ENCODE measurements at regions of chr18 and their contacts with region 1.

Region 1: DNA sequence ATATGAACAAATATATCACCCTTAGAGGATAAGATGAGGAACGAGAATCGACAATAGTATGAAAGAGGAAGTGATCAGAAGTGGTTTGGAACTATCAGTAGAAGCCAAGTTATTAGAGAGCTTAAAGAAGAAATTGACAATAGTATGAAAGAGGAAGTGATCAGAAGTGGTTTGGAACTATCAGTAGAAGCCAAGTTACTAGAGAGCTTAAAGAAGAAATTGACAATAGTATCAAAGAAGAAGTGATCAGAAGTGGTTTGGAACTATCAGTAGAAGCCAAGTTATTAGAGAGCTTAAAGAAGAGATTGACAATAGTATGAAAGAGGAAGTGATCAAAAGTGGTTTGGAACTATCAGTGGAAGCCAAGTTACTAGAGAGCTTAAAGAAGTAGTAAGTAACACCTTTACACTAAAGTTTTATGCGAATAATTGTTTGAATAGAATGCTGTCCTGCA is 175.5 kb downstream of the ZNF407 start:
- DNase-seq: no peak
- ATAC-seq: no peak

Region 2: DNA sequence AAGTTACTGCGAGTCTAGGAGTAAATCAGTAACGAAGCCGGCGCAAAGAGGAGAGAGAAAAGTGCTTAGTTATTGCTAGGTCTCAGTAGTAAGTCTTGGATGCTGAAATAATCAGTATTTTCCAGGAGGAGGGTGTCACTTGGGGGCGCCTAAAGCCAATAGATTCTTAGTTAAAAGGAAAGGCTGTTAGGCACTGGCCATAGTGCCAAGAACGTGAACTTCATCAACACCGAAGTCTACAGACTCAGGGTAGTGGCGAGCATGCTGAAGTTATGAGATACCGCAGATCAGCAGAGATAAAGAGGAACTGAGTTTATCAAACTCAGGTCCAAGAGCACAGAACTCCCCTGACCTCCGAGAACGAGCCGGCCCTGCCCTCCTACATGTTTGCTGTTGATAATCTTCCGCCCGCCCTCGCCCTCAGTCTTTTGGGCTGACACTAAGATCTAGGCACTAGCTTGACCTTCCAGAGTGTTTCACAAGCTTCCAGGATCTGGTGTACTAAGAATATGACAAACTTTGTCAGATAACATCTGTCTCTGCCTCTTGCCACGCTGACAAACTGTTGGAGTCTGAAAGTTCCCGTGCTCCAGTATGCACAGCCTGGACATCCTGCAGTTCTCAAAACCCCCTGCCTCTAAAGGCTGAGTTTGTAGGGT is 530.6 kb before region 1 on chr18:
- intact Hi-C with region 1: no loop called
- DNase-seq: peak; percentile 68
- ATAC-seq: peak; percentile 91

Region 3: DNA sequence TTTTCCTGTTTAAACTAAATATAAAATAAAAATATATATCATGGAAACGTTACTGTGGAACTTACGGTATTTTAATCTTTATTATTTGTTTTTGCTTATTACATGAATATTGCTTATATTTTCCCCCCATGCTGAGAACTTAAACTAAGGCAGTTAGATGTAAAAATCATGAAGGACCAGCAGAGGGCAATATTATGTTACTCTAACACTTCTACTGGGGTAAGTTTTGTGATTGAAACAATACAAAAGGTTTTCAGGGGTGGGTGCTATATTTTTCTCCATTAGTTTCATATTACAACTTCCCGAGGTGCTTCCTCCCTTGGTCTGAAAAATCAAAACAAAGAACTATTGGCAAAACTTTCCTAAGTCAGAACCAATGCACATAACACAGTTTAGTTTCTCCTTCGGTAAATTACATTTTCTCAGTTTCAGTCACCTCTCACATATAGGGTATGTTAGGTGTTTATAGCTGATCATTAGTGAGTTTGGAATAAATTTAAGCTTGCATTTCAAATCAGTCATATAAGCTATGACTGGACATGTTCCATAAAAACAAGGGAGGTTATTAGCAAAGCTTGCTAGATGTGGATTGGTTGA is 120.7 kb before region 1 on chr18:
- intact Hi-C with region 1: no loop called
- DNase-seq: no peak
- ATAC-seq: no peak

Region 4: GRCh38 chr18:74662622-74663021 is 110.6 kb before region 1 on chr18:
- intact Hi-C with region 1: no loop called
- DNase-seq: no peak
- ATAC-seq: no peak

Region 5: GRCh38 chr18:74739926-74740325 is 33.3 kb before region 1 on chr18:
- intact Hi-C with region 1: loop called (anchors 5 kb)
- DNase-seq: no peak
- ATAC-seq: no peak

Region 6: DNA sequence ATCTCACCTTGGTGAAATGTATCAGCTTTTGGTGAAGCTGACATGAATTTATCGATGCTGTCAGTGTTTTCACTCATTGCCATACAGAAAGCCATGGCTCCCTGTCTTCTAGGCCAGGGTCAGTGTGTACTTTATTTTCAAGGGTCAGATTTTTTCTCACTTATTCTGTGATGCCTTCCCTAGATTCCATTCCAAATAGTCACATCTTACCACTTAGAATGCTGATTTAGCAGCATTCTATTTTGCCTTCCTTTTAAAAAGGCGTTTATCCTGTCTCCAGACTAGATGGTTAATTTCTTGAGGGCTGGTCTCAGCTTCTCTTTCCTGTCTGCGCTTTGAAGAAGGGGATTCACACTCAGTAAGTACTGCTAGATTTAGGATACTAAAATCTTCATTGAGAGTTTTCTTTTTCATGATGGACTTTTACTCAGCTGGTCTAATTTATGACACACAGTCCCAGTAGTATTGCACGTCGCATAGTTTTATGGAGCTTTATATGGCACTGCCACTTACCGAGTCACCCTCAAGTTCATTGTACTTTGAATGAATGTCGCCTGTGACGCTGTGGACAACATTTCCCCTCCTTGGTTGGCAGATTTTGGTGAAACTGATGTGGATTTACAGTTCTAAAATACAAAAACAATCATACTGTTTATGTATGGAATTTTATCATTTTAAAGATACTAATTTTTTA is 18.4 kb after region 1 on chr18:
- intact Hi-C with region 1: loop called (anchors 2 kb)
- DNase-seq: no peak
- ATAC-seq: no peak

Region 7: GRCh38 chr18:74896390-74896991 is 123.3 kb after region 1 on chr18:
- intact Hi-C with region 1: no loop called
- DNase-seq: no peak
- ATAC-seq: peak; percentile 52

Measured in Right ventricle myocardium inferior (tissue), 1 donor.